K562 (cell line): ENCODE measurements at regions of chr10 and their contacts with region 1.

Region 1: DNA sequence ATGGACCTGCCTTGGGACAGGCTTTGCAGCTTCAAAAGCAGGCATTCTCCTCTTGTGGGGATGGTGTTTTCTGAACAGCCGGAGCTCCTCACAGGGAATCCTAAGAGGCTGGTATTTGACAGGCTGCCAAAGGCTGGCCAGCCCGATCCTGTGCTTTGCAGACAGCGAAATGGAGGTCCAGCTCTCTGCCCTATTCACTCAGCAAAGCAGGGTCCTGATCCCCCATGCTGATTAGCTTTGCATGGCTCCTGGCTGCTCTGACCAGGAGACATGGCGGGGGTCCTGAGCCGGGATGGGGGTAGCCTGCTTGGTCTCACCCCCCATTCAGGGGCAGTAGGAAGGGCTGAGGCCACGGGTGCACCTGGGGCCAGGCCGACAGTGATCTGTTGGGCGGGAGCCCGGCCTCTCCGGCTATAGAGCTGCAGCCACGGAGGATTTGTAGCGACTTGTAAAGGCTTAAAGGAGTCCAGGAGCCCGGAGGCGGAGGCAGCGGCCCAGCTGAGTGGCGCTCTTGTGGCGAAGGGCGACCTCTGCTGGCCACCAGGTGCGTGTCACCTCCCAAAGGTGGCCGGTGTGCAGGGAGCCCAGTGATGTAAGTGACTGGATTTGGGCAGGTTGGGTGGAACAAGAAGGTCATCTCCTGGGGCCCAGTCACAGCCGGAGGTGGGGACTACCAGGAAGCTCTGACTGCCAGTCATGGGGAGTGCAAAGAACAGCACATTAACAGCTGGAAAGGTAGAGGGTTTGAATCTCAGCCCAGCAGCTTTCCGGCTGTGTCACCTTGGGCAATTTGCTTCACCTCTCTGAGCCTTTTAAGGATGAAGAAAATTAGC is 126.5 kb downstream of the ZMIZ1 start:
- DNase-seq: peak; percentile 89 to 95 (median 92)
- ATAC-seq: peak; percentile 94
- H3K4me3 ChIP-seq: no peak overlapping the region
- H3K27ac ChIP-seq: no peak overlapping the region
- H3K4me1 ChIP-seq: peaks cover 17 to 33% of the 10 kb centered on the region in 2 experiments
- H3K27me3 ChIP-seq: no peaks in the 10 kb centered on the region
- CTCF ChIP-seq: peak; percentile 96 to 98 (median 97)
- EP300 ChIP-seq: peak; percentile 42; the same call in 1 of the 2 replicates
- POLR2A ChIP-seq: no peak
- RAD21 ChIP-seq: peak; percentile 99

Region 2: DNA sequence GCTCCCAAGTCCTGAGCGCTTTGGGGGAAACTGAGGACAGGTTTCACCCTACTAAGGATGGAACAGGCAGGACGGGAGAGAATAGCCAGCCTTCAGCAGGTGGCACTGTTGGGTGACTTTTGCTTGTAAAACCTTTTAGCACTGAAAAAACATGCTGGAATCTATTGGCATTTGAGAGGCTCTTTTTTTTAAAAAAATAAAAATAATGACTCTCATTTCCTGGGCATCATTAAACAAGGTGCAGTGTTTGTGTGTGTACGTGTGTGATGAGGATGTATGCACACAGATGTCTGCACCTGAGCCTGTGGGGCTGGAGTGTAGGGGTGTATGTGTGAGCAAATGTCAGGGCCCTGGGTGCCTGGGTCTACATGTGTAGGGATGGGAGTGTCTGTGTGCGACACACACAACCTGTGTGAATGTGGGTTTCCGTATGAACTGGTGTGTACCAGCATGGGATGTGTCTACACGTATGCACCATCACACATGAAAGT is 983.7 kb before region 1 on chr10:
- CTCF ChIA-PET with region 1: no interaction called
- POLR2A ChIA-PET with region 1: no interaction called
- in situ Hi-C with region 1: no loop called
- intact Hi-C with region 1: loop called (anchors 10 kb)
- DNase-seq: peak in 1 of 4 experiments; percentile 23
- ATAC-seq: no peak
- H3K4me3 ChIP-seq: no peak overlapping the region
- H3K27ac ChIP-seq: no peak overlapping the region
- H3K4me1 ChIP-seq: no peaks in the 10 kb centered on the region
- H3K27me3 ChIP-seq: peaks cover 6 to 34% of the 10 kb centered on the region in 2 experiments; a peak in 3 of 5 replicates
- CTCF ChIP-seq: peak in 2 of 3 experiments; percentile 53 to 63; a peak in 4 of 6 replicates
- EP300 ChIP-seq: no peak
- POLR2A ChIP-seq: no peak
- RAD21 ChIP-seq: peak; percentile 69 to 70

Region 3: DNA sequence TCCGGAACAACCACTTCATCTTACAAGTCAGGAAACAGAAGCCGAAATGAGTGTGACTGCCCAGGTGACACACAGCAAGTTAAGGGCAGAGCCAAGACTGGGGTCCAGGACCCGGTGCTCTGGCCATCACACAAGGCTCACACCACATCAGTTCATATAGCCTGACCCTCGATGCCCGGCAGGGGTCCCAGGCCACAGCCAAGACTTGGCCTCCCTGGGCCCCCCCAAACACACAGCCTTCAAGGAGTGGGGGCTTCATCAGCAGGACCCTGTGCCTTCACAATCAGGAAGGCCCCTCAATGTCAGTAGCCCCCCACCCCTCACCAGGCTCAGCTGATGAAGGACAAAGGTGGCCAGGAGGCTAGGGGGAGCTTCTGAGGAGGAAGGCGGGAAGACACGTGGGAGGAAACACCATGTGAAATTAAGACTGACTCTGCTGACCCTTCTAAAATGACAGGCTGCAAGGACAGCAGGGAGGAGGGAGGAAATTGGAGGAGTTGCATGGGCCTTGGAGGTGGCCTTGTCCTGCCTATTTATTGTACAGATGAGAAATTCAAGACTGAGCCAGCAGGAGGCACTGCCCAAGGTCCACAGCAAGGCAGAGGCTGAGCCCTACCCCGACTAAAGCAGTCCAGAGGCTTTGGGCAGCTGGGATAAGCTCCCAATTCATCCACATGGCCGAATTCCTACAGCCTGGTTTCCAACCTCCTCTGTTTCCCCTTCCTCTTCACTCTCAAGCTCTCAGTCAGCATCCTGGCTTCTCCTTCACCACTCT is 342.7 kb before region 1 on chr10:
- CTCF ChIA-PET with region 1: no interaction called
- POLR2A ChIA-PET with region 1: interaction called, 3 read pairs
- in situ Hi-C with region 1: no loop called
- intact Hi-C with region 1: loop called (anchors 10 kb)
- DNase-seq: peak; percentile 38 to 41 (median 38)
- ATAC-seq: peak; percentile 88
- H3K4me3 ChIP-seq: no peak overlapping the region
- H3K27ac ChIP-seq: no peak overlapping the region
- H3K4me1 ChIP-seq: no peaks in the 10 kb centered on the region
- H3K27me3 ChIP-seq: peaks cover 7 to 43% of the 10 kb centered on the region in 2 experiments; a peak in 3 of 5 replicates
- CTCF ChIP-seq: peak; percentile 49 to 67 (median 60)
- EP300 ChIP-seq: no peak
- POLR2A ChIP-seq: no peak
- RAD21 ChIP-seq: peak; percentile 28 to 55; a peak in 2 of 4 replicates

Region 4: DNA sequence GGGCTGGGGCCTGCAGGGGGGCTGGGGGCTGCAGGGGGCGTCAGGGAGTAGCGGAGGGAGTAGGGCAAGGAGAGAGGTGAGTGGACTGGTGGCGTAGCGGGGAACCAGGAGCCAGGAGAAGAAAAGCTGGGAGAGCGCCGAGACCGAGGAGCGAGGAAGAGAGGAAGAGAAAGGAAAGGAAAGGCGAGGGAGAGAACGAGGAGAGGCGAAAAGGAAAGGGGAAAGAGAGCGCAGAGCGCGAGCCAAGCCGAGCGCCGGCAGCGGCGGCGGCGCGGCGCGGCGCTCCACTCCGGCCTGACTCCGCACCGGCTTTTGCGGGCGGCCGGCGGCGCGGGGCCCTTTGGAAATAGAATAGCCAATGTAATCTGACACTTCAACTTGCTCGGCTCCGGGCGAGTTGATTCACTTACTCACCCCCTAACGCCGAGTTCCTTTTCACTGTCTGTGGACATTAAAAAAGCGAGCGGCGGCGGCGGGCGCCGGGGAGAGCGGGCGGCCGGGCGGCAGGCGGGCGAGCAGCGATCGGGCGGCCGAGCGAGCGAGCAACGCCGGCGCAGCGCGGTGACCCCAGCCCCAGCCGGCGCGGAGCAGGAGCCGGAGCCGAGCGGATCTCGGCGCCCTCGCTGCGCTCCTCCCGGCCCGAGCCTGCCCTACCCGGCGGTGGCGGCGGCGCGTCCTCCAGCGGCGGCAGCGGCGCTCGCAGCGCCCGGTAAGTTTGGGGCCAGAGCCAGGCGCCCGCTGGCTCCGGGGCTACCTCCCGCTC is 126.6 kb before region 1 on chr10 and contains the start of gene ZMIZ1:
- CTCF ChIA-PET with region 1: interaction called, 7 read pairs
- POLR2A ChIA-PET with region 1: interaction called, 5 read pairs
- in situ Hi-C with region 1: no loop called
- intact Hi-C with region 1: loop called (anchors 1 kb)
- DNase-seq: peak; percentile 83 to 97 (median 92)
- ATAC-seq: peak; percentile 68
- H3K4me3 ChIP-seq: peak within 1 kb of the TSS; percentile 83
- H3K27ac ChIP-seq: peak within 1 kb of the TSS; percentile 84
- H3K4me1 ChIP-seq: peaks cover 14 to 54% of the 10 kb centered on the region in 2 experiments; a peak in 4 of 5 replicates
- H3K27me3 ChIP-seq: no peaks in the 10 kb centered on the region
- CTCF ChIP-seq: peak in 2 of 3 experiments; percentile 55 to 83; a peak in 4 of 6 replicates
- EP300 ChIP-seq: peak; percentile 71
- POLR2A ChIP-seq: no peak; the same call in 1 of the 2 replicates
- RAD21 ChIP-seq: peak; percentile 57 to 71
- polyA plus RNA-seq, gene ZMIZ1: 1.0 to 1.9 TPM

Region 5: GRCh38 chr10:79144351-79145173 is 50.7 kb before region 1 on chr10:
- CTCF ChIA-PET with region 1: no interaction called
- POLR2A ChIA-PET with region 1: interaction called, 6 read pairs
- in situ Hi-C with region 1: no loop called
- intact Hi-C with region 1: loop called (anchors 1 kb)
- DNase-seq: no peak
- ATAC-seq: no peak
- H3K4me3 ChIP-seq: no peak overlapping the region
- H3K27ac ChIP-seq: no peak overlapping the region; the same call in 2 of the 3 replicates
- H3K4me1 ChIP-seq: peaks cover 59 to 73% of the 10 kb centered on the region in 2 experiments
- H3K27me3 ChIP-seq: no peaks in the 10 kb centered on the region
- CTCF ChIP-seq: no peak
- EP300 ChIP-seq: no peak
- POLR2A ChIP-seq: no peak
- RAD21 ChIP-seq: no peak